ENCODE measurements at regions of chr10 and their contacts with region 1.

Region 1: GRCh38 chr10:101095542-101096213 is 33.9 kb downstream of the KAZALD1 start:
- DNase-seq: peak; percentile 99
- ATAC-seq: peak; percentile 99
- H3K4me3 Mint-ChIP-seq: no peak overlapping the region
- H3K27ac Mint-ChIP-seq: no peak overlapping the region
- H3K4me1 Mint-ChIP-seq: peaks cover 22% of the 10 kb centered on the region
- H3K27me3 Mint-ChIP-seq: peaks cover 12% of the 10 kb centered on the region
- CTCF ChIP-seq: peak; percentile 64

Region 2: DNA sequence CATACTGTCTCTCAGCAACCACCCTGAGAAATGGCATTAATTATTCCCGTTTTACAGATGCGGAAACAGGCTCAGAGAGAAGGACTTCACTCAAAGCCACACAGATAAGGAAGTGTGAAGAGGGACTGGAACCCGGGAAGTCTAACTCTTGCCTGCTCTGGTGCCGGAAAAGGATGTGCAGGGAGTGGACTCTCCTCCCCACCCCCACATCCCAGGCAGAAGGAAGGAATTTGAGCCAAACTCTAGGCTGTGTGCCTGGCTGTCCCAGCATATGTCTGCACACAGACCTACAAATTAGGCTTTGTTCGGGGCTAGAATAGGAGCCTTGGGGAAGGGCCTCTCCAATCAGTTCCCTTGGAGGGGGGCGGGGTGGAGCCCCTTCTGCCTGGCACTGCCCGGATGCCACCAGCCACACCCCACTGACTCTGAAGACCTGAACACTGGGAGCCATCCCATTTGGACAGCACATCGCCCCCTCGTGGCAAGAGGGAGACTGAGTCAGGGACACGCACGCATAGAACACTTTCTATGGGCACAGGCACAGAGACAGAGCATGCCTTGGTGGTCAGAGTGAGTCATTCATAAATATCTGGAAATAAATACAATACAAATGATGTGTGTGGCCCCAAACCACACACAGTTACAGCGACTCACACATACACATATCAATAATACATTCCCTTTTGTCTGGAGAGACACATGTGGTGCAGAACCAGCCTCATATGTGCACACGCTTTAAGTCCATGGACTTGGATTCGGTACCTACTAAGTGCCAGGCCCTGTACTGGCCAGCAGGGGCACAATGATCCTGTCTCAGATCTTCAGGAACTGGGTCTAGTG is 82.9 kb before region 1 on chr10:
- CTCF ChIA-PET with region 1: interaction called, 14 read pairs
- POLR2A ChIA-PET with region 1: no interaction called
- DNase-seq: peak; percentile 84
- ATAC-seq: peak; percentile 68
- H3K4me3 Mint-ChIP-seq: no peak overlapping the region
- H3K27ac Mint-ChIP-seq: no peak overlapping the region
- H3K4me1 Mint-ChIP-seq: peaks cover 33% of the 10 kb centered on the region
- H3K27me3 Mint-ChIP-seq: peaks cover 34% of the 10 kb centered on the region
- CTCF ChIP-seq: peak; percentile 63

Region 3: DNA sequence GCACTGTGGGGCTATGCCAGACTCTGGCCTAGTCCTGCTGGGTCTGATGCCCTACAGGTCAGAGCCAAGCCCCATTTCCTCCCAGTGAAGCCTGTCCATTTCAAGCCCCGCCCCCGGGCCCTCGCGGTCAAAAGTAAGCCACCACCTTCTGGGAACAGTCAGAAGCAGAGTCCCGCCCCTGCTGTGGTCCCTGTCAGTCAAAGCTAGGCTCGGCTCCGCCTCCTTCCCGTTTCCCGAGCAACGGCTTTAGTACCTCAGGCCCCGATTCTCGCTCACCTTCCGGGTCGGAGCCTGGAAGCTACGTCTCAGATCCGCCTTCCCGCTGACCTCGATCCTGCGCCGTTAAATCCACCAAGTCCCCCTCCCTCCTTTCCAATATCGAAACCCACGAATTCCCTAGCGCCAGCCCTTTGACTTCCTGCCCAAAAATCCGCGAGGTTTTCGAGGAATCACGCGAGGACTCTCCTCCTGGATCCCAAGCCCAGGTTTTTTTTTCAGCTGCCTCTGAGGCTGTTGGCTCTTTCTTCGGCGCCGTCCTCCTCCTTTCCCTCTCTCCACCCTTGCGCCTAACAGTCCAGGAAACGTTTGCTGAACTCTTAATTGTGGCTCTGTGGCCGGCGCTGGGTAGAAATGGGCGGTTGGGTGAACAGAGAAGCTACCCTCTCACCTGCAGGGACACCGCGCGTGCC is 52.9 kb before region 1 on chr10:
- CTCF ChIA-PET with region 1: interaction called, 140 read pairs
- POLR2A ChIA-PET with region 1: interaction called, 4 read pairs
- DNase-seq: peak; percentile 99
- ATAC-seq: peak; percentile 86
- H3K4me3 Mint-ChIP-seq: peak overlapping the region; percentile 94
- H3K27ac Mint-ChIP-seq: peak overlapping the region; percentile 92
- H3K4me1 Mint-ChIP-seq: peaks cover 33% of the 10 kb centered on the region
- H3K27me3 Mint-ChIP-seq: peaks cover 59% of the 10 kb centered on the region
- CTCF ChIP-seq: no peak

Region 4: GRCh38 chr10:101067356-101068083 is 28.2 kb before region 1 on chr10:
- CTCF ChIA-PET with region 1: interaction called, 84 read pairs
- POLR2A ChIA-PET with region 1: interaction called, 3 read pairs
- DNase-seq: peak; percentile 89
- ATAC-seq: peak; percentile 26
- H3K4me3 Mint-ChIP-seq: peak overlapping the region; percentile 93
- H3K27ac Mint-ChIP-seq: no peak overlapping the region
- H3K4me1 Mint-ChIP-seq: peaks cover 42% of the 10 kb centered on the region
- H3K27me3 Mint-ChIP-seq: peaks cover 72% of the 10 kb centered on the region
- CTCF ChIP-seq: peak; percentile 68

Region 5: DNA sequence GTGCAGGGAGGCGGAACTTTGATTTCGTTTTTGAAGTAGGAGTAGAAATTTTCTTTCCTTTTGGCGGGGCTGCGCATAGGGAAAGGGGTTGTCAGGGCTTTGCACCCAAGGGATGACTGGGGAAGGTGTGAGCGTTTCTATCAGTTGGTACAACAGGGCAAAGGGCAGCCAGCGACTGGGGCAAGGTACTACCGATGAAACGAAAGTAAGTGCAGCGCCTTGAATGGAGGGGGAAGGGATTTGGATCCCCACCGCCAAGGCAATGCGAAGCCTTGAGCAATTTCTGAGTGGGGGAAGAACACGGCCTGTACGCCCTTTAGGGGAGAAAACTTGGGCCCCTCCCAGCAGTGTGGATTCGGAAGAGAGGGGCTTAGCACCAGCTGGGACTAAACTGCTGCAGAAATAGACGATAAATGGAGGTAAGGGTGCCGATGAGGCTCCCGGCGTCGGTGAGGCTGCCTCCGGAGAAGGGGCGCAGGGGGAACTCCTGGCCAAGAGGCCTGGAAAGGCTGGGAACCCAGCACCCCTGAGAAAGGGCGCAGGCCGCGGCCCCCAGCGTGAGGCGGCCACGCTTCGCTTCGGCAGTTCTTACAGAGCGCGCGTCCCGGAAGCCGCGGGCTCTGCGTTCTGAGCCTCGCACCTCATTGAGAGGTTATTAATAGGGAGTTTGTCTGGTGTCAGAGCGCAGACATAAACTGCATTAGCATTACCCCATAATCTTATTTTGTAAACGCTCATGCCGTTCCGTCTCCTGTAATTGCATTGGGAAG is 25.4 kb after region 1 on chr10:
- CTCF ChIA-PET with region 1: interaction called, 219 read pairs
- POLR2A ChIA-PET with region 1: no interaction called
- DNase-seq: no peak
- ATAC-seq: no peak
- H3K4me3 Mint-ChIP-seq: peak overlapping the region; percentile 72
- H3K27ac Mint-ChIP-seq: no peak overlapping the region
- H3K4me1 Mint-ChIP-seq: peaks cover 20% of the 10 kb centered on the region
- H3K27me3 Mint-ChIP-seq: peaks cover 98% of the 10 kb centered on the region
- CTCF ChIP-seq: no peak

Region 6: DNA sequence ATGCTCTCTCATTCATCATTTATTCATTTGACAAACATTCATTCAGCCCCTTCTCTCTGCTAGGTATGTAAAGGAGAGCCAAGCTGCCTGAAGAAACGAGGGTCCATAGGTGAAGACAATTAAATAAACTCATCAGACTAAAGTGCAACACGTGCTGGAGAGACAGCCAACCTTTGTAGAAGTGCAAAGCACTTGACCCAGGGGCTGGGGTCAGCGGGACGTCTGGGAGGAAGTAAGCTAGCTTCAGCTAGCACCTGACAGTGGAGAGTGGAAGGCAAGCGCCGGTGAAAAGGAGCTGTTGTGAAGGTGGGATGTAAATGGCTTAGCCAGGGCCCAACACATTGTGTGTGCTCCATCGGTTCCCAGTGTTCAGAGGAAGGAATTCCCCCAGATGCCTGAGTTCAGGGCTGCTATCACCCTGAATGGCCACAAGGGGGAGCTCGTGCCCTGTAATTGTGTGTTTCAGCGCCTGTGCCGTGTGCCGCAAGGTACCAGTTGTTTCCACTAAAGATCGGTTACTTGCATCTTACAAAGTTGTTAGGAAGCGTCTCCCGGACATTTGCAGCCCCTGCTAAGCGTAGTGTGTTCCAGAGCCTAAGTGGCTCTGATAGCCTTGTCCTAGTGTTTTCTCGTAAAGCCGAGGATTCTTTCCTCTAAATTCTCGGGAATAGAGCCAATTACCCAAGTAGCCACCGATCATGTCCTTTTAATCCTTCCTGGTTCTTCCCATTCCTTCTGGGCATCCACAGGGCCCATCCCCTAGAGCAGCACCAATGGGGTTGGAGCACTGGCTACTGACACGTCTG is 66.0 kb after region 1 on chr10:
- CTCF ChIA-PET with region 1: interaction called, 10 read pairs
- POLR2A ChIA-PET with region 1: interaction called, 4 read pairs
- DNase-seq: peak; percentile 83
- ATAC-seq: peak; percentile 96
- H3K4me3 Mint-ChIP-seq: peak overlapping the region; percentile 55
- H3K27ac Mint-ChIP-seq: no peak overlapping the region; the same call in 1 of the 2 replicates
- H3K4me1 Mint-ChIP-seq: peaks cover 37% of the 10 kb centered on the region
- H3K27me3 Mint-ChIP-seq: peaks cover 52% of the 10 kb centered on the region
- CTCF ChIP-seq: peak; percentile 97